Astrocyte of the cerebellum (primary cell): ENCODE measurements at regions of chr20 and their contacts with region 1.

Region 1: DNA sequence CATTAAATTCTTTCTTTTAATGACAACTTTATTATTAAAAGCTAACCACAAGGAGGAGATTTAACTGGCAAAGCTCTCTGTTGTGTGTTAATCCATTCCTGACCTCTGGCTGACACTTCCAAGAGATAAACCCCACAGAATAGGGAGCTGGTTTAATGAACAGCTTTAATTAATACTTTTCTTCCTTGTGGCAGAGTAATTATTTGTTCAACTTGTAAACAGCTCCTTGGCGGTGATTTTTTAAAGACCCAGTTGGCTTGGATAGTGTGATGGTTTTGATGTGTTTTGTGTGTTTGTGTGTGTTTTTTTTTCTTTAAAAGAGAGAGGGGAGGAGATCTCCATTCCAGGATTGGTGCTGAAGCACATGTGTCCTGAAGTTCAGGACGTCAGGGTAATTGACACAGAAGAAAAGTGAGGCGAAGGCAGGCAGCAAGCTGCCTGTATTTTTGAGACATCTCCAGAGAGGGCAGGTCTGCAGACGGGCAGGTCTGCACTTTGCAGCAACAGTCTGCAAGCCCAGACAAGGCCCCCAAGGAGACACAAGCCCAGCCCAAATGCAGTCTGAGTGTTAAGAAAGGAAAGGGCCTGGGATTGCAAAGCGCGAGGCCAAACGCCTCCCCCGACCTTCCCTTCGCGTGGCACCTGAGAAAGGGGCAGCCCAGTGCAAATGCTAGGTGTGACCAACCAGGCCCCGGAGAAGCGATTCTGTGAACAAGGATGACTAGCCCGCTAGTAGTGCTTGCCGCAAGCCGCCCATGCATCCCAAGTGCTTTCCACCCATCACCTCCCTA is 230.7 kb downstream of the ZMYND8 start:
- DNase-seq: no peak
- H3K4me3 ChIP-seq: no peak overlapping the region
- CTCF ChIP-seq: no peak

Region 2: GRCh38 chr20:47066484-47067186 is 59.1 kb before region 1 on chr20:
- in situ Hi-C with region 1: loop called (anchors 5 kb)
- DNase-seq: no peak
- H3K4me3 ChIP-seq: no peak overlapping the region
- CTCF ChIP-seq: no peak